Cardiac septum (tissue), 1 donor: ENCODE measurements at regions of chr5 and their contacts with region 1.

Region 1: GRCh38 chr5:128083033-128083810 is at the start of gene SLC12A2:
- DNase-seq: peak; percentile 96
- total RNA-seq, gene SLC12A2: 21.6 TPM

Region 2: DNA sequence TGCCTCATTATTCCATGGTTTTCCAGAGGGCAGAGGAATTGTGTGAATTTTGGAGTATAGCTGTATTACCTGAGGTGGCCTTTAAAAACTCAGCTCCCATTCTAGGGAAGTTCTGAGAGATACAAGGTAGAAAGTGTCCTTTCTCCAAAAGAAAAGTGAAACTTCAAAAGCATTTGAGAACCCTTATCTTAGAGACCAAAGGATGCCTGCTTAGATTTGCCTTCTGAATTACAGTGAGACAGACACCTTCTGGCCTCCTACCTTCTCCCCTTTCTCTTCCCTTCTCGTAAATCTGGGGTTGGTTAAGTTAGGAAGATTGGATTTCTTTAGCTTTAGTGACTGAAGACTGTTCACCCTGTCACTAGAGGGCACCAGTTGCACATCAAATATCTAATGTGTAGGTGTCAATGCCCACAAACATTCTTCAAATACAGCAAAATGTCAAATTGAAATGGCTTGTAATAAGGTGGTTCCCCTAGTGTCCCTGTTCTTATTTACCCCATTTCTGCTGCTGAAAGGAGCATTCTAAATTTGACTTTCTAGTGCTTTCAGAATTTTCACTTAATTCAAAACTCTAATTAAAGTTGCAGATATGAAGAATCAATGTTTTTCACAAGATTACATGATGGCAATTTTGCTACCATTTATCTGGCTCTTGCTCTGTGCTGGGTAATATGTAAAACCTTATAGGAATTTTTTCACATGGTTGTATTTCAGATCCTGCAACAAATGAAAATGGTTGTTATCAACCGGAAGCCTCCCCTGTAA is 519.0 kb before region 1 on chr5:
- intact Hi-C with region 1: loop called (anchors 5 kb)
- DNase-seq: no peak

Region 3: DNA sequence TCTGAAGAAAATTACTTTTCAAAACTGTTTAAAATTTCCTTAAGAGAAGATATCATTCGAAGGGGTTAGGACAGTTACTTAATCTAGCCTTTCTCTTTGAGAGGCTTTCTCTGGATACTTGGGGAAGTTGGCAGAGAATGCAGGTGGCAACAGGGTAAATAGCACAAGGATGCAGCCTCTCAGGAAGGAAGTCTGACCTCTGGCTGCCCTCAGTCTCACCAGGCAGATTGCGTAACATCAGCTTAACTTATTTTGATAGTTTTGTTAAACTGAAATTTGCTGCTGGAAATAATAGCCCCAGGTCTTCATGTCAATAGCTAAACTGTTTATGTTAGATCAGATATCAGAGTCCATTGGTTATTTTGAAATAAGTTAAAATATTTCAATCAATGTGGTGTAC is 359.6 kb before region 1 on chr5:
- intact Hi-C with region 1: no loop called
- DNase-seq: peak; percentile 75

Region 4: GRCh38 chr5:127875235-127876021 is 207.8 kb before region 1 on chr5:
- intact Hi-C with region 1: loop called (anchors 2 kb)
- DNase-seq: no peak

Region 5: DNA sequence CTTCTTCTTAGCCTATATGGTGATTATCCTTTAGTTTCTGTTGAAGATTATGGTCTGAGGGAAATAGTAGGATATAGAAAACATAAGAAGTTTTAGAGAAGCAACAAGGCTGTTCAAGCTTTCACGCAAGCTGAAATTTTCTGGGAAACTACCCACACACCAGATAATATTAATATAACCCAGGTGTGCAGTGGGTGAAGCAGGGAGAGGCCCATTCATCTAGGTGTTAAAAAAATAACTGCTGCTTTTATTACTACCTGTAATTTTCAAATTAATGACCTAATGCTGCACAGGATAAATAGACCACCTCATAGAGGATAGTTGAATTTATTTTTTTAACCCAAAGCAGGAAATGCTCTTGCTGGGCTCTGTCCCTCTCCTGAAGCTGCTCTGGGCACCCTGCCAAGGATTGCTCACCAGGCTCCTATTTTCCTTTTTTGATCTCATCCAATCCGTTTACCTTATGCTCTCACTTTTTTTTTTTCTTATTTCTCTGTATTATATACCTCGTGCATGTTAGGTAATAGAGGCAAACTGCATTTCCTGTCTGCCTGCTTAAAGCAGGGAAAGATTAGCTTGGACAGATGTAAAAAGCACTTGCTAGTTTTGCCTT is 124.0 kb before region 1 on chr5:
- intact Hi-C with region 1: loop called (anchors 5 kb)
- DNase-seq: no peak

Region 6: DNA sequence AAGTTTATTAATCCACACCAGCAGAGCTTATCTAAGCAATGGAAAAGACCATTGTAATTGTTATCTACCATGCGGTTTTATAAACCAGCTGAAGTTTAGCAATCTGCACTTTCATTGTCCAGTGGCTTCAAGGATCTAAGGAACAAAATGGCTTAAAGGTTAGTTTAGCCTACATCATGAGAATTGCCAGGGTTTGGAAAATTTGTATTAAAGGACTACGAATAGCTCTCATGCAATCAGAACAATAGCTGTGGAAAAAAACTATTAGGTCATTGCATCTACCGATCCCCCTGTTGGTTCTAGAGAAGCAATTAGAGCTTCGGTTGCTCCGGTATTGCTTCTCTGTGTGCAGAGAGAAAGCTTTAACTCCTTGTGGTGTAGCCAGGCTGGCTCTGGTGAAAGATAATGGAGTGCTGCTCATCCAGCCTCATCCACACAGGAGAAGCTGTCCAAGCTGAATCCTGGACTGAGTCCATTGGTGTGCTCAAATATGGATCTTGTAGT is 86.0 kb before region 1 on chr5:
- intact Hi-C with region 1: no loop called
- DNase-seq: no peak

Region 7: GRCh38 chr5:128201065-128201926 is 118.1 kb after region 1 on chr5:
- intact Hi-C with region 1: loop called (anchors 5 kb)
- DNase-seq: peak; percentile 90

Region 8: DNA sequence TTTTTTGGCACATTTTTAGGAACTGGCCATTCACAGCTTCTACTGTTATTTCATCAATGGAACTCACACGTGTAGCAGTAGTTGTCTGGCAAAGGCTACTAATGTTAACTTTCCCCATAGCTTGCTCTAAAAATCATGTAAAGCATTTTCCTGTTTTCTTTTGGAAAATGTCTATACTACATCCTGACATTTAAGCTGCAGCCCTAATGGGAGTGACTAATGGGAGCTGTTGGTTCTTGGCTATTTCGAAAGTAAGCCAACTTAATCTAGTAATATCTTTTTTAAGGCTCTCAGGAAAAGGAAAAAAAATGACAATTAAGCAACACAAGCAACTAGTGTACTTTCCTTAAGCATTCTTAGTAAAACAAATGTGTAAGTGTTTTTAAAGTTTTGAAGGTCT is 169.5 kb after region 1 on chr5:
- intact Hi-C with region 1: no loop called
- DNase-seq: no peak